A549 (cell line): ENCODE measurements at regions of chr19 and their contacts with region 1.

Region 1: DNA sequence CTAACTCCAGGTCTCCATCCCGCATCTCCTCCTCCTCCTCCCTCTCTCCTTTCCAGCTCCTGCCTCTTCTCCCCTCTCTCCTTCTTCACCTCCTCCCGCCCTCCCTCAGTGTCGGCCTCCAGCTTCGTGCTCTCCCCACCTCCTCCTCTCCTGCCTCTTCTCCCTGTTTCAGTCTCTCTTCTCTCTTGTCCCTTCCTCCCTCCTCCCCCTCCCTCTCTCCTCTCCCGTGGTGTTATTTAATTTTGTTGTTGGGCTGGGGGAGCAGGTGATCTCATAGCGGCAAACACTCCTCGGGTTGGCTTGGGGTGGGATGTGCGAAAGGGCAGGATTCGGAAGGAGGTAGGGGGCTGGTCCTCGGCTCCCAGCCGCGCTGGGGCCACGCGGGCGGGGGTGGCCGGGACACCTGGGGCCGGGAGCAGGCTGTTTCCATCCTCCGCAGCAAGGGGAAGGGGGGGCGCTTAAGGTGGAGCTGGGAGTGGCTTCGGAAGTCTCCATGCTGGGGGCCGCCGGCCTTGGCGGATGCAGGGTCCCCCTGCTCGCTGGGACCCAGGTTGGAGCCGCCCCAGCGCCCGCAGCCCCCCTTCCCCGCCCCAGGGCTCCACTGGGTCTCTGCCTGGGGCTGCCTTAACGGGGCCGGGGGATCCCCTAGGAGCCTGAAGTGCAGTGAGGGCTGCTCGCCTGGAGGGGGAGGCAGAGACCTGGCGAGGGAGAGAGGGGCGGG is at the start of gene CA11:
- DNase-seq: peak; percentile 91 to 97
- ATAC-seq: peak; percentile 85 to 90
- H3K4me3 ChIP-seq: peak within 1 kb of the TSS; percentile 54
- H3K27ac ChIP-seq: peak within 1 kb of the TSS; percentile 87 to 88
- H3K4me1 ChIP-seq: peaks cover 18% of the 10 kb centered on the region; the same call in 2 of the 3 replicates
- CTCF ChIP-seq: peak; percentile 90
- EP300 ChIP-seq: no peak
- POLR2A ChIP-seq: no peak; the same call in 1 of the 2 replicates
- RAD21 ChIP-seq: peak; percentile 97 to 98
- polyA plus RNA-seq, gene CA11: 8.8 and 9.8 TPM in 2 replicates

Region 2: DNA sequence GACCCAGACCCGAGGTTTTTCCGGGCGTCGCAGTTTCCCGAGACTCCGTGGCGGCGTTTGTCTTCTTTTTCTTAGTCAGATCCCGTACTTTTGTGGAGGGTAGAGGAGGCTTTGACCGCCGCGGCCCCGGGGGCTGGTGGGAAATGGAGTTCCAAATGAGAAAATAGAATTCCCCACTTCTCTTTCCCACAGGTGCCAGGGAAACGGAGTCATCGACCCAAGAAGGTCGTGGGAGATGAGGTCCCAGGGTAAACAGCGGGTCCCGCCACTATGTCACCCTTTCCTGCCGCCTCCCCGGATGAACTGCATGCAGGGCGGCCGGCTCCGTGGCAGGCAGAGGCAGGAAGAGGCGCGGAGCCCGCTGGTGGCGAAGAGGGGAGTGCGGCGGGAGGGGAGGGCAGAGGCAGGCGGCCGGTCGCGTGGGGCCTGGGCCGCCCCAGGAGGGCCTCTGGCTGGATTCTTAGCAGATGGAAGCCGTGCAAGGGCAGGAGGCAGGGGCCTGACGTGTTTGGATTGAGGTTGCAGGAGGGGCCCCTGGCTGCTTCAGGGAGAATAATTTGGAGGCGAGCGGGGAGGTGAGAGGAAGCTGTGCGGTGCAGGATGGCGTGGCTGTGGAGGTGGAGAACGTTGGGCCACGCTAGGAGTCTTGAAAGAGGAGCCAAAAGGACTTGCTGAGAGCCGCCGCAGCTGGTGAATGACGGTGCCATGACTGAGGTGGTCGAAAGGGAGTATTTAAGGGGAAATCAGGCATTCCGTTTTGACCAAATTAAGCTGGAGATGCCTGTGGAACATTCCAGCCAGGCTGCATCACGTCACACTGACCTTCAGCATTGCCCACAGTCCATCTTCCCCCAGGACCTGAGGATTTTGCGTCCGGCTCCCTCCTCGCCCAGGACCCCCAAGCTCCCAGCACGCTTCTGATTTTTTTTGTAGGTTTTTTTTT is 165.3 kb before region 1 on chr19:
- CTCF ChIA-PET with region 1: no interaction called
- POLR2A ChIA-PET with region 1: no interaction called
- DNase-seq: no peak
- ATAC-seq: no peak
- H3K4me3 ChIP-seq: no peak overlapping the region
- H3K27ac ChIP-seq: no peak overlapping the region
- H3K4me1 ChIP-seq: peaks cover 20% of the 10 kb centered on the region
- CTCF ChIP-seq: no peak
- EP300 ChIP-seq: no peak
- POLR2A ChIP-seq: no peak
- RAD21 ChIP-seq: no peak

Region 3: GRCh38 chr19:48553676-48554386 is 92.3 kb before region 1 on chr19:
- CTCF ChIA-PET with region 1: no interaction called
- POLR2A ChIA-PET with region 1: no interaction called
- DNase-seq: peak; percentile 94 to 99
- ATAC-seq: peak; percentile 64 to 74
- H3K4me3 ChIP-seq: no peak overlapping the region
- H3K27ac ChIP-seq: peak overlapping the region; percentile 97 to 100
- H3K4me1 ChIP-seq: peaks cover 72% of the 10 kb centered on the region
- CTCF ChIP-seq: no peak; the same call in 2 of the 3 replicates
- EP300 ChIP-seq: peak; percentile 91 to 98; a peak in 3 of 5 replicates
- POLR2A ChIP-seq: no peak
- RAD21 ChIP-seq: peak in 1 of 2 experiments; percentile 71; a peak in 4 of 5 replicates

Region 4: GRCh38 chr19:48660854-48661731 is 14.9 kb after region 1 on chr19:
- CTCF ChIA-PET with region 1: interaction called, 26 read pairs
- POLR2A ChIA-PET with region 1: interaction called, 8 read pairs
- DNase-seq: peak; percentile 91 to 96
- ATAC-seq: peak; percentile 70 to 88
- H3K4me3 ChIP-seq: no peak overlapping the region
- H3K27ac ChIP-seq: peak overlapping the region; percentile 5 to 61; a peak in 3 of 6 replicates
- H3K4me1 ChIP-seq: no peaks in the 10 kb centered on the region
- CTCF ChIP-seq: no peak
- EP300 ChIP-seq: no peak
- POLR2A ChIP-seq: no peak
- RAD21 ChIP-seq: no peak

Region 5: GRCh38 chr19:48713864-48714758 is 68.0 kb after region 1 on chr19:
- CTCF ChIA-PET with region 1: interaction called, 21 read pairs
- POLR2A ChIA-PET with region 1: no interaction called
- DNase-seq: peak; percentile 100
- ATAC-seq: peak; percentile 92
- H3K4me3 ChIP-seq: peak overlapping the region; percentile 68
- H3K27ac ChIP-seq: peak overlapping the region; percentile 86 to 90
- H3K4me1 ChIP-seq: peaks cover 16% of the 10 kb centered on the region
- CTCF ChIP-seq: no peak
- EP300 ChIP-seq: no peak
- POLR2A ChIP-seq: peak; percentile 83
- RAD21 ChIP-seq: no peak

Region 6: DNA sequence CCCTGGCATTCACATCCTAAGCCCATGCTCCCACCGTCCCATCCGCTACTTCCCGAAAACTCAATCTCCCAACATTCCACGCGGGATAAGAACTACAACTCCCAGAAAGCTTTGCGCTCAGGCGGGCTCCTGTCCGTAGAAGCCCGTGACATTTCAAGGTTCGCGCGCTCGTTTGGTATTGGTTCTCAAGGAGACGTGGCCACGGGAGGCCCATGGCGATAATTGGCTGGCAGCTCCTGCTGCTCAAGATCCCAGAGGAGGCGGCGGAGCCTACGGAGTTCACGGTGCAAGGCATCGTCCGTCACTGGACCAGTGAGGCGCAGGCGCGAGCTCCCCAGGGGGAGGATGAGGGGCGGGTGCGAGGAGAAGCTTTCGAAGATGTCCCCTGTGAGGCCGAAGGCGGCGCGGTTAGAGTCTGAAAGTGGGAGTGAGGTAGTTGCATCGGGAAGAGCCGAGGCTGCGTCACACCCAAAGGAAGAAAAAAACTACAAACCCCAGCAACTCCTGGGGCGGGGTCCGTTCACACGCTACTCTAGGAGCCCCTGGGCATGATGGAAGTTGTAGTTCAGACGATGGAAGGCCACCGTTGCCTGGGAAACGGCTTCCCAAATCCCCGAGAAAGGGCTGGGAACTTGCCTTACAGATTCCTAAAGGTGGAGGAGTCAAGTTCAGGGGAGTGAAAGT is 74.6 kb after region 1 on chr19:
- CTCF ChIA-PET with region 1: interaction called, 16 read pairs
- POLR2A ChIA-PET with region 1: interaction called, 4 read pairs
- DNase-seq: peak; percentile 100
- ATAC-seq: peak; percentile 92 to 95
- H3K4me3 ChIP-seq: peak overlapping the region; percentile 53
- H3K27ac ChIP-seq: peak overlapping the region; percentile 81 to 88
- H3K4me1 ChIP-seq: peaks cover 13% of the 10 kb centered on the region
- CTCF ChIP-seq: no peak
- EP300 ChIP-seq: no peak
- POLR2A ChIP-seq: peak; percentile 24; the same call in 1 of the 2 replicates
- RAD21 ChIP-seq: no peak

Region 7: GRCh38 chr19:48738557-48739399 is 92.6 kb after region 1 on chr19:
- CTCF ChIA-PET with region 1: interaction called, 22 read pairs
- POLR2A ChIA-PET with region 1: interaction called, 15 read pairs
- DNase-seq: peak; percentile 87 to 95
- ATAC-seq: peak; percentile 80 to 85
- H3K4me3 ChIP-seq: peak overlapping the region; percentile 59
- H3K27ac ChIP-seq: peak overlapping the region; percentile 82 to 89
- H3K4me1 ChIP-seq: peaks cover 16% of the 10 kb centered on the region
- CTCF ChIP-seq: peak; percentile 92
- EP300 ChIP-seq: no peak
- POLR2A ChIP-seq: peak; percentile 64
- RAD21 ChIP-seq: peak; percentile 34 to 81; a peak in 4 of 5 replicates